MCF 10A (cell line): ENCODE measurements at regions of chr6 and their contacts with region 1.

Region 1: DNA sequence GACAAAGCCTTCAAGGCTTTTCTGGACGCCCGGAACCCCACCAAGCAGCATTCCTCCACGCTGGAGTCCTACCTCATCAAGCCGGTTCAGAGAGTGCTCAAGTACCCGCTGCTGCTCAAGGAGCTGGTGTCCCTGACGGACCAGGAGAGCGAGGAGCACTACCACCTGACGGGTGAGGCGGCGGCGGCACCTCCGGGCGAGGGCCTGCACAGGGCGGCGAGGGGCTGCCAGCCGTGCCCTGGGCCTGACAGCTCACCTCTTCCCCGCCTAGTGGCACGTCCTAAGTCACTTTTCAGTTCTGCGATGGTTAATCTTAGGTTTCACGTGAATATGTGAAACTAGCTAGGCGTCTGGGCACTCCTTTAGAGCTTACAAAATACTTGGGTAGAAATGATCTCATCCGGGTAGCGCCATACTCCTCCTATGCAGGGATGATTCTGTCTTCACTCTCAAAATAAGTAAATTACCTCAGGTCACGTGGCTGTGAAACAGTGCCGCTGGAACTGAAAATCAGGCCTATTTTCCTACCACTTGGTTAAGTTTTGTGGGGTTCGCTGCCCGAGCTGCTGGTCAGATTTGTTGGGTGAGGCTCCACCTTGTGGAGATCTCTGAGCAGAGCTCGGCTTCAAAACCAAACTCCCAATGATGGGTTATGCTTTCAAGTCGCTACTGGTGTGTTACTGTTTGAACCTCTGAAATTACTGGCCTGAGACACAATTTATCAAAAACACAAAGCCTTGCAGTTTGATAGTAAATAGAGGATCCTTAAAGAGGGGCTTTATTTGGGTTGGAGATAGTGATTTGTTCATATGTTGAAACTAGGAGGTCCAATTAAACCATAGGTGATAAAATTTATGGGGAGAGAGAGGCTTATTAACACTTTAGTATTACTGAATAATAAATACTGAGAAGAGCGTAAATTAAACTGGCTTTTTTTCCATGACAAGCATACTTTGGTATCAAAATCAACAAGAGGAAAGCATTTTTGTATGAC is 15.5 kb upstream of the CLDN20 start:
- DNase-seq: peak; percentile 54
- H3K4me3 Mint-ChIP-seq: no peak overlapping the region
- H3K27ac Mint-ChIP-seq: peak overlapping the region; percentile 71
- H3K4me1 Mint-ChIP-seq: no peaks in the 10 kb centered on the region
- H3K27me3 Mint-ChIP-seq: no peaks in the 10 kb centered on the region
- CTCF ChIP-seq: peak; percentile 62

Region 2: DNA sequence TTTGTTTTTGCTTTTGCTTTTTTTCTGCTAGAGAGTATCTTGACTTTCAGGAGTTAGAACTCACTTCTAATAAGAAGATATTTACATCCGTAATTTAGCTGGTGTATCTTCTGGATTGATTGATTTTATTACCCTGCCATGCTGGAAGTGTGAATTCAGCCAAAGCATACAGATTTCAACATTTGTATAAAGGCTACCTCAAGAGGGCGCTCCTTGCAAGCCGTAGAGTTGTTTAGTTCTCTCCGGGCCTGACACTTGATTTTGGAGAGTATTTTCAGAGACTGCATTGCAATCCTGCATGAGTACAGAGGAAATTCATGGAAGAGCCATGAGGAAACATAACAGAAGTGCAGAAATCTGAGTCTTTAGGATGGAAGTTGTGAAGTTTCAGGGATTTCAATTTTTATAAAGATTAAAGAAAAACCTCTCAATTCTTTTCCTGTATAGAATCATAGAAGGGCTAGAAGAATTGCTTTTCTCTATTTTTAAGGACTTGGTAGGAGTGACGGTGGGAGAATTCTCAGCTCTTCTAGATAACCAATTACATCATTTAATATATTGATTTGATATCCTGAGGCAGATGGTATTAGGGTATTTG is 319.9 kb before region 1 on chr6:
- CTCF ChIA-PET with region 1: interaction called, 19 read pairs
- POLR2A ChIA-PET with region 1: no interaction called
- intact Hi-C with region 1: loop called (anchors 1 kb)
- DNase-seq: peak; percentile 77
- H3K4me3 Mint-ChIP-seq: no peak overlapping the region
- H3K27ac Mint-ChIP-seq: no peak overlapping the region
- H3K4me1 Mint-ChIP-seq: peaks cover 24% of the 10 kb centered on the region
- H3K27me3 Mint-ChIP-seq: no peaks in the 10 kb centered on the region
- CTCF ChIP-seq: peak; percentile 84

Region 3: DNA sequence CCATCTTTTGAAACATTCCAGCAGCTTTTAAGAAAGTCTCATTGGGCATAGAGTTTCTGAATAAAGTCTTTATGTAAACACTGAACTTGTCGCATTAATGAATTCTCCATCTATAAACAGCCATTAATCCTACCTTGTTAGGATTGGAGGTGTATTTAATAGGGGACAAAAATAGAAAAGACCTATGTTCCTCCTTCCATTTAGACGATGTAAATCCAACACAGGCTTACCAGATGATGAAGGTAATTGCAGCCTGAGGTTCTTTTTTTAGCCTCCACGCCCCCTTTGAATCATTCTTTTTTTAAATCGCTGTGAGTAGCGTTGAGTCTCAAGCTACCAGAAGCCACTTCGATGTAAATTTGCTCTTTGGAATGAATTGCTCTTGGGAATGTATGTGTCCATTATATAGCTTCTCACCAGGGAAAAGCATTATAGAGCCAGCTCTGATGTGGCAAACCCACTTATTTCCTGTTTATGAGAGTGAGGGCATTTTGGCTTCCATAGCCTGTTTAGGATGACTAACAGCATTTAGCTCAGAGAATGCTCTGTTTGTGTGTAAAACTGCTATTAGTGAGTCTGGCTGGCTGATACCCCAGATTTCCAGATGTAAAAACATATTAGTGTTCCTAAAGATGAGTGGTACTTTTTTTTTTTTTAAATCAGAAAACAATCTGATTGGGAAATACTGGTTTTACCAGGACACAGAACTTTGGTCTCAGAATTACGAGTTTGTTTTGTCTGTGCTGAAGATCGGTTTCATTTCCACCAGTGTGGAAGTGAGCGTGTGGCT is 59.4 kb before region 1 on chr6:
- CTCF ChIA-PET with region 1: interaction called, 11 read pairs
- POLR2A ChIA-PET with region 1: interaction called, 4 read pairs
- intact Hi-C with region 1: no loop called
- DNase-seq: peak; percentile 85
- H3K4me3 Mint-ChIP-seq: peak overlapping the region; percentile 37
- H3K27ac Mint-ChIP-seq: peak overlapping the region; percentile 81
- H3K4me1 Mint-ChIP-seq: peaks cover 23% of the 10 kb centered on the region
- H3K27me3 Mint-ChIP-seq: no peaks in the 10 kb centered on the region
- CTCF ChIP-seq: no peak

Region 4: GRCh38 chr6:155235087-155235486 is 13.2 kb before region 1 on chr6:
- CTCF ChIA-PET with region 1: interaction called, 30 read pairs
- POLR2A ChIA-PET with region 1: no interaction called
- intact Hi-C with region 1: no loop called
- DNase-seq: no peak
- H3K4me3 Mint-ChIP-seq: no peak overlapping the region
- H3K27ac Mint-ChIP-seq: no peak overlapping the region
- H3K4me1 Mint-ChIP-seq: no peaks in the 10 kb centered on the region
- H3K27me3 Mint-ChIP-seq: no peaks in the 10 kb centered on the region
- CTCF ChIP-seq: no peak

Region 5: GRCh38 chr6:155259204-155259603 is 10.9 kb after region 1 on chr6:
- CTCF ChIA-PET with region 1: interaction called, 14 read pairs
- POLR2A ChIA-PET with region 1: no interaction called
- intact Hi-C with region 1: no loop called
- DNase-seq: no peak
- H3K4me3 Mint-ChIP-seq: no peak overlapping the region
- H3K27ac Mint-ChIP-seq: no peak overlapping the region
- H3K4me1 Mint-ChIP-seq: no peaks in the 10 kb centered on the region
- H3K27me3 Mint-ChIP-seq: no peaks in the 10 kb centered on the region
- CTCF ChIP-seq: no peak

Region 6: GRCh38 chr6:156310701-156311100 is 1062.4 kb after region 1 on chr6:
- CTCF ChIA-PET with region 1: no interaction called
- POLR2A ChIA-PET with region 1: no interaction called
- intact Hi-C with region 1: no loop called
- DNase-seq: no peak
- H3K4me3 Mint-ChIP-seq: no peak overlapping the region
- H3K27ac Mint-ChIP-seq: no peak overlapping the region
- H3K4me1 Mint-ChIP-seq: peaks cover 11% of the 10 kb centered on the region
- H3K27me3 Mint-ChIP-seq: no peaks in the 10 kb centered on the region
- CTCF ChIP-seq: no peak